ENCODE measurements at regions of chr9 and their contacts with region 1.

Region 1: GRCh38 chr9:104795082-104795481 is 31.2 kb downstream of the NIPSNAP3B start:
- DNase-seq: no peak
- ATAC-seq: no peak
- H3K4me3 Mint-ChIP-seq: no peak overlapping the region
- H3K27ac Mint-ChIP-seq: no peak overlapping the region
- H3K4me1 Mint-ChIP-seq: peaks cover 2% of the 10 kb centered on the region
- H3K27me3 Mint-ChIP-seq: no peaks in the 10 kb centered on the region
- CTCF ChIP-seq: no peak

Region 2: DNA sequence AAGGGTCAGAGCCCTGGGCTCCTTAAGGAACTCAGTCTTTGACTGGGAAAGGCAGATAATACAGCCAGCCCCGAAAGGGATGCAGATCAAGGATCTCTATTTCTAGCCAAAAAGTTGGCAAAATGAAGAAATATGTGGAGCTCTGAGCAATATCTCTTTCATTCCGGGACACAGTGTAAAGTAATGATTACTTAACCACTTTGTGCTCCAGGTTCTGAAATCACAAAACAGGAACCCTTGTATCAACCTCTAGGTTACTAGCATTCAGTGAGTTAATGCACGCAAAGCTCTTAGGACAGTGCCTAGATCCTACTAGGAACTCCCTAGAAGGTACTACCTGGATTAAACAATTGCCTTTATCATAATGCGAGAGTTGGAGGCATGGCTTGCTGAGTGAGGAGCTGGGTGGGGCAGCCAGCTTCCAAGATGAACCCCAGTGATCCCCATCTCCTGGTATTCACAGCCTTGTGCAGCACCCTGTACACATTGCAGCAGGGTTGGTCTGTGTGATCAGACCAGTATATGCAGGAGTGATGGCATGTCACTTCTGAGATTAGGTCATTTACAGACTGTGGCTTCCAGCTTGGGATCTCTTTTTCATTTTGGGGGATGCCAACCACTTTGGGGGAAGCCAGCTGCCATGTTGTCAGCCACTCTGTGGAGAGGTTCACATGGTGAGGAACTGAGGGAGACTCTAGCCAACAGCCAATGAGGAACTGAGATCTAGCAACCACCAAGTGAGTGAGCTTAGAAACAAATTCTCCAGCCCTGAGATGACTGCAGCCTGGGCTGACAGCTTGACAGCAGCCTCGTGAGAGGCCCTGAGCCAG is 346.3 kb after region 1 on chr9:
- CTCF ChIA-PET with region 1: no interaction called
- POLR2A ChIA-PET with region 1: no interaction called
- intact Hi-C with region 1: loop called (anchors 10 kb)
- DNase-seq: no peak
- ATAC-seq: no peak
- H3K4me3 Mint-ChIP-seq: no peak overlapping the region
- H3K27ac Mint-ChIP-seq: no peak overlapping the region
- H3K4me1 Mint-ChIP-seq: peaks cover 12% of the 10 kb centered on the region
- H3K27me3 Mint-ChIP-seq: peaks cover 1% of the 10 kb centered on the region
- CTCF ChIP-seq: no peak